ENCODE measurements at regions of chr16 and their contacts with region 1.

Region 1: GRCh38 chr16:75764154-75764768 is 38.0 kb upstream of the CPHXL start:
- DNase-seq: peak in 8 of 9 donors; percentile 37 to 72 (median 63)
- ATAC-seq: peak; percentile 98
- H3K4me3 ChIP-seq: no peak overlapping the region
- H3K4me3 Mint-ChIP-seq: no peak overlapping the region
- H3K27ac ChIP-seq: no peak overlapping the region
- H3K27ac Mint-ChIP-seq: peak overlapping the region in 5 of 9 donors; percentile 8 to 55 (median 19)
- H3K4me1 ChIP-seq: no peaks in the 10 kb centered on the region
- H3K4me1 Mint-ChIP-seq: peaks cover 0 to 5% (median 0%) of the 10 kb centered on the region in 7 donors
- H3K27me3 ChIP-seq: no peaks in the 10 kb centered on the region
- H3K27me3 Mint-ChIP-seq: peaks cover 0 to 20% (median 13%) of the 10 kb centered on the region in 5 donors

Region 2: GRCh38 chr16:75385507-75386152 is 378.6 kb before region 1 on chr16:
- CTCF ChIA-PET with region 1: no interaction called
- POLR2A ChIA-PET with region 1: no interaction called
- intact Hi-C with region 1: loop called (anchors 1 to 10 kb)
- DNase-seq: peak in 7 of 9 donors; percentile 35 to 71 (median 55)
- ATAC-seq: peak; percentile 67
- H3K4me3 ChIP-seq: no peak overlapping the region
- H3K4me3 Mint-ChIP-seq: no peak overlapping the region
- H3K27ac ChIP-seq: no peak overlapping the region
- H3K27ac Mint-ChIP-seq: peak overlapping the region in 1 of 9 donors; percentile 59
- H3K4me1 ChIP-seq: peaks cover 4 to 14% of the 10 kb centered on the region in 2 donors
- H3K4me1 Mint-ChIP-seq: peaks cover 9 to 25% (median 20%) of the 10 kb centered on the region in 7 donors
- H3K27me3 ChIP-seq: no peaks in the 10 kb centered on the region
- H3K27me3 Mint-ChIP-seq: peaks cover 0 to 17% (median 0%) of the 10 kb centered on the region in 5 donors

Region 3: DNA sequence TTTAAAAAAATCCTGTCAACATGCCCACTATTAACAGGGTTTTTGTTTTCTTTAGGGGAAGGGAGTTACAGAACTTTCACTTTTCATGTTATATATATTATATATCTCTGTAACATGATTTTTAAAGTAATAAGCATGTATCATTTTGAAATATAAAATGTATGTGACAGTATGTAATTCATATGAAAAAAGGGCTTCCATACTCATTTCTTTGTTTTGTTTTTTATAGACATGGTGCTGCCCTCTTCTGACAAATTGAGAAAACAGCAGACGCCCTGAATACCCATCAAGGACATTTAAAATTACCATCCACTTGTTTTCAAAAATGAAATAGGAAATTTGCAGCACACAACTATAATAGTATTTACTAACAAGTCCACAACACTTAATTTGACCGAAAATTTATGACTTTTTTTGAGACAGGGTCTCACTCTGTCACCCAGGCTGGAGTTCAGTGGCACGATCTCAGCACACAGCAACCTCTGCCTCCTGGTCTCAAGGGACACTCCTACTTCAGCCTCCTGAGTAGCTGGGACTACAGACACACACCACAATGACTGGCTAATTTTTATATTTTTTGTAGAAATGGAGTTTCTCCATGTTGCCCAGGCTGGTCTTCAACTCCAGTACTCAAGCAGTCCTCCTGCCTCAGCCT is 361.3 kb before region 1 on chr16:
- CTCF ChIA-PET with region 1: no interaction called
- POLR2A ChIA-PET with region 1: no interaction called
- intact Hi-C with region 1: loop called (anchors 1 kb)
- DNase-seq: peak in 5 of 9 donors; percentile 20 to 45 (median 31)
- ATAC-seq: peak; percentile 69
- H3K4me3 ChIP-seq: no peak overlapping the region
- H3K4me3 Mint-ChIP-seq: no peak overlapping the region
- H3K27ac ChIP-seq: no peak overlapping the region
- H3K27ac Mint-ChIP-seq: peak overlapping the region in 1 of 9 donors; percentile 47
- H3K4me1 ChIP-seq: no peaks in the 10 kb centered on the region
- H3K4me1 Mint-ChIP-seq: peaks cover 0 to 6% (median 0%) of the 10 kb centered on the region in 7 donors
- H3K27me3 ChIP-seq: no peaks in the 10 kb centered on the region
- H3K27me3 Mint-ChIP-seq: no peaks in the 10 kb centered on the region

Region 4: GRCh38 chr16:75471723-75472633 is 292.3 kb before region 1 on chr16:
- CTCF ChIA-PET with region 1: interaction called, 12 read pairs
- POLR2A ChIA-PET with region 1: no interaction called
- intact Hi-C with region 1: loop called (anchors 1 kb)
- DNase-seq: peak in 6 of 9 donors; percentile 15 to 48 (median 38)
- ATAC-seq: peak; percentile 91
- H3K4me3 ChIP-seq: no peak overlapping the region
- H3K4me3 Mint-ChIP-seq: no peak overlapping the region
- H3K27ac ChIP-seq: no peak overlapping the region
- H3K27ac Mint-ChIP-seq: peak overlapping the region in 1 of 9 donors; percentile 81
- H3K4me1 ChIP-seq: no peaks in the 10 kb centered on the region
- H3K4me1 Mint-ChIP-seq: peaks cover 0 to 6% (median 4%) of the 10 kb centered on the region in 7 donors
- H3K27me3 ChIP-seq: no peaks in the 10 kb centered on the region
- H3K27me3 Mint-ChIP-seq: peaks cover 0 to 5% (median 0%) of the 10 kb centered on the region in 5 donors

Region 5: GRCh38 chr16:75519881-75520280 is 244.4 kb before region 1 on chr16:
- CTCF ChIA-PET with region 1: no interaction called
- POLR2A ChIA-PET with region 1: no interaction called
- intact Hi-C with region 1: loop called (anchors 1 to 2 kb)
- DNase-seq: no peak
- ATAC-seq: no peak
- H3K4me3 ChIP-seq: no peak overlapping the region
- H3K4me3 Mint-ChIP-seq: no peak overlapping the region
- H3K27ac ChIP-seq: no peak overlapping the region
- H3K27ac Mint-ChIP-seq: no peak overlapping the region
- H3K4me1 ChIP-seq: peaks cover 0 to 3% of the 10 kb centered on the region in 2 donors
- H3K4me1 Mint-ChIP-seq: peaks cover 5 to 17% (median 13%) of the 10 kb centered on the region in 7 donors
- H3K27me3 ChIP-seq: no peaks in the 10 kb centered on the region
- H3K27me3 Mint-ChIP-seq: peaks cover 0 to 9% (median 0%) of the 10 kb centered on the region in 5 donors

Region 6: GRCh38 chr16:75576384-75576811 is 187.9 kb before region 1 on chr16:
- CTCF ChIA-PET with region 1: no interaction called
- POLR2A ChIA-PET with region 1: no interaction called
- intact Hi-C with region 1: loop called in 1 of 2 experiments (anchors 10 kb)
- DNase-seq: no peak
- ATAC-seq: no peak
- H3K4me3 ChIP-seq: no peak overlapping the region
- H3K4me3 Mint-ChIP-seq: no peak overlapping the region
- H3K27ac ChIP-seq: no peak overlapping the region
- H3K27ac Mint-ChIP-seq: peak overlapping the region in 2 of 9 donors; percentile 17 to 73
- H3K4me1 ChIP-seq: no peaks in the 10 kb centered on the region
- H3K4me1 Mint-ChIP-seq: peaks cover 9 to 29% (median 18%) of the 10 kb centered on the region in 7 donors
- H3K27me3 ChIP-seq: no peaks in the 10 kb centered on the region
- H3K27me3 Mint-ChIP-seq: no peaks in the 10 kb centered on the region

Region 7: GRCh38 chr16:75599452-75600277 is 164.6 kb before region 1 on chr16:
- CTCF ChIA-PET with region 1: no interaction called
- POLR2A ChIA-PET with region 1: no interaction called
- intact Hi-C with region 1: loop called in 1 of 2 experiments (anchors 5 kb)
- DNase-seq: no peak
- ATAC-seq: no peak
- H3K4me3 ChIP-seq: no peak overlapping the region
- H3K4me3 Mint-ChIP-seq: no peak overlapping the region
- H3K27ac ChIP-seq: no peak overlapping the region
- H3K27ac Mint-ChIP-seq: no peak overlapping the region
- H3K4me1 ChIP-seq: no peaks in the 10 kb centered on the region
- H3K4me1 Mint-ChIP-seq: peaks cover 0 to 4% (median 2%) of the 10 kb centered on the region in 7 donors
- H3K27me3 ChIP-seq: no peaks in the 10 kb centered on the region
- H3K27me3 Mint-ChIP-seq: no peaks in the 10 kb centered on the region

Measured in naive thymus-derived CD4-positive, alpha-beta T cell (primary cell).